MCF 10A (cell line): ENCODE measurements at regions of chr2 and their contacts with region 1.

Region 1: DNA sequence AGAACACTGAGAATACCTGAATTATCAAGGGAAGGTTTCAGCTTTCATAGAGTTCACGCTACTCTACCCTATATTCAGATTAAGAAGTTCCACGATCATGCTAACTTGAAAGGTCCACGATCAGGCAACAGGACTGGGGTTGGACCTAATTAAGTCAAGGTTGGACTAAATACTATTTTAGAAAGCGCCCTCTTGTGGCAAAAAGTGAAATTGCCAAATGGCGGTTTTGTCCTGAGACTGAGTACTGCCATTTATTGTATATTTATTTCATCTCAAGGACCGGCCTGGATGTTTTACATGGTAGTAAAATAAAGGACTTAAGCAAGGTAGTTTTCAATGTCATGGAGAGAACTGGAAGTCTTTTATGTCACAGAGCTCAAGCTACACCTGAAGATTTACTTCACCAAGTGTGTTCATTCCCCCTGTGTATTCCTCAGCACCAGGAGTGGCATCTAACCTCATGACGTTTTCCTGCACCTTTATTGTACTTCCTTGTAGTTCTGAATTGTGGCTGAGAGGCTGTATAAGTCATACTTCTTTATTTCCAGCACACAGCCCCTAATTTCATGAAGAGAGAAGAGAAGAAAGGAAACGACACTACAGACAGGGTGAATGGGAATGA is 56.8 kb downstream of the SRD5A2 start:
- DNase-seq: peak; percentile 70
- H3K4me3 Mint-ChIP-seq: no peak overlapping the region
- H3K27ac Mint-ChIP-seq: no peak overlapping the region
- H3K4me1 Mint-ChIP-seq: no peaks in the 10 kb centered on the region
- H3K27me3 Mint-ChIP-seq: no peaks in the 10 kb centered on the region
- CTCF ChIP-seq: peak; percentile 71

Region 2: GRCh38 chr2:30736461-30737325 is 787.3 kb before region 1 on chr2:
- CTCF ChIA-PET with region 1: no interaction called
- POLR2A ChIA-PET with region 1: no interaction called
- intact Hi-C with region 1: no loop called
- DNase-seq: no peak
- H3K4me3 Mint-ChIP-seq: no peak overlapping the region
- H3K27ac Mint-ChIP-seq: no peak overlapping the region
- H3K4me1 Mint-ChIP-seq: no peaks in the 10 kb centered on the region
- H3K27me3 Mint-ChIP-seq: peaks cover 28% of the 10 kb centered on the region
- CTCF ChIP-seq: no peak

Region 3: GRCh38 chr2:31333527-31334183 is 190.3 kb before region 1 on chr2:
- CTCF ChIA-PET with region 1: interaction called, 12 read pairs
- POLR2A ChIA-PET with region 1: no interaction called
- intact Hi-C with region 1: no loop called
- DNase-seq: peak; percentile 83
- H3K4me3 Mint-ChIP-seq: no peak overlapping the region
- H3K27ac Mint-ChIP-seq: no peak overlapping the region
- H3K4me1 Mint-ChIP-seq: peaks cover 31% of the 10 kb centered on the region
- H3K27me3 Mint-ChIP-seq: no peaks in the 10 kb centered on the region
- CTCF ChIP-seq: peak; percentile 96

Region 4: DNA sequence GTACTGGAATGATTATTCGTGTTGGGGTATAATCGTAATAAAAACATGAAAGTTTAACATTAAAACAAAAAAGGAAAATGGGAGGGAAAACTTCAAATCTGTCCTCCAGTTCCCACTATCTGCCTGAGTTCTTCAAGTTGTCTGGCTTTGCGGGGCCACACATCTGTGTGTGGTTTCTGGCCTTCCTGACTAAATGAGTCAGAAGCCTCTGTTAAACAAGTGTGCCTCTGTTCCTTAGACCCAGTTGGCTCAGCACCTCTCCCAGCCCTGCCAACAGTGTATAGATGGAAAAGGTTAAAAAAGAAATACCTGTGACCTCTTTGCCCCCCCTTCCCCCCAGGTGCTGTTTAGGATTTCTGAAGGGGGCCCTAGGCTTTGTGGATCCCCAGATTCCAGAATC is 139.6 kb before region 1 on chr2:
- CTCF ChIA-PET with region 1: interaction called, 16 read pairs
- POLR2A ChIA-PET with region 1: interaction called, 3 read pairs
- intact Hi-C with region 1: no loop called
- DNase-seq: peak; percentile 89
- H3K4me3 Mint-ChIP-seq: peak overlapping the region; percentile 34
- H3K27ac Mint-ChIP-seq: peak overlapping the region; percentile 99
- H3K4me1 Mint-ChIP-seq: peaks cover 25% of the 10 kb centered on the region
- H3K27me3 Mint-ChIP-seq: no peaks in the 10 kb centered on the region
- CTCF ChIP-seq: no peak

Region 5: GRCh38 chr2:31504311-31504710 is 19.7 kb before region 1 on chr2:
- CTCF ChIA-PET with region 1: interaction called, 15 read pairs
- POLR2A ChIA-PET with region 1: no interaction called
- intact Hi-C with region 1: no loop called
- DNase-seq: no peak
- H3K4me3 Mint-ChIP-seq: no peak overlapping the region
- H3K27ac Mint-ChIP-seq: no peak overlapping the region
- H3K4me1 Mint-ChIP-seq: no peaks in the 10 kb centered on the region
- H3K27me3 Mint-ChIP-seq: no peaks in the 10 kb centered on the region
- CTCF ChIP-seq: no peak

Region 6: GRCh38 chr2:31534636-31535035 is 10.7 kb after region 1 on chr2:
- CTCF ChIA-PET with region 1: interaction called, 20 read pairs
- POLR2A ChIA-PET with region 1: no interaction called
- intact Hi-C with region 1: no loop called
- DNase-seq: peak; percentile 43
- H3K4me3 Mint-ChIP-seq: no peak overlapping the region
- H3K27ac Mint-ChIP-seq: no peak overlapping the region
- H3K4me1 Mint-ChIP-seq: no peaks in the 10 kb centered on the region
- H3K27me3 Mint-ChIP-seq: no peaks in the 10 kb centered on the region
- CTCF ChIP-seq: no peak